Endothelial cell of umbilical vein (primary cell): ENCODE measurements at regions of chr12 and their contacts with region 1.

Region 1: DNA sequence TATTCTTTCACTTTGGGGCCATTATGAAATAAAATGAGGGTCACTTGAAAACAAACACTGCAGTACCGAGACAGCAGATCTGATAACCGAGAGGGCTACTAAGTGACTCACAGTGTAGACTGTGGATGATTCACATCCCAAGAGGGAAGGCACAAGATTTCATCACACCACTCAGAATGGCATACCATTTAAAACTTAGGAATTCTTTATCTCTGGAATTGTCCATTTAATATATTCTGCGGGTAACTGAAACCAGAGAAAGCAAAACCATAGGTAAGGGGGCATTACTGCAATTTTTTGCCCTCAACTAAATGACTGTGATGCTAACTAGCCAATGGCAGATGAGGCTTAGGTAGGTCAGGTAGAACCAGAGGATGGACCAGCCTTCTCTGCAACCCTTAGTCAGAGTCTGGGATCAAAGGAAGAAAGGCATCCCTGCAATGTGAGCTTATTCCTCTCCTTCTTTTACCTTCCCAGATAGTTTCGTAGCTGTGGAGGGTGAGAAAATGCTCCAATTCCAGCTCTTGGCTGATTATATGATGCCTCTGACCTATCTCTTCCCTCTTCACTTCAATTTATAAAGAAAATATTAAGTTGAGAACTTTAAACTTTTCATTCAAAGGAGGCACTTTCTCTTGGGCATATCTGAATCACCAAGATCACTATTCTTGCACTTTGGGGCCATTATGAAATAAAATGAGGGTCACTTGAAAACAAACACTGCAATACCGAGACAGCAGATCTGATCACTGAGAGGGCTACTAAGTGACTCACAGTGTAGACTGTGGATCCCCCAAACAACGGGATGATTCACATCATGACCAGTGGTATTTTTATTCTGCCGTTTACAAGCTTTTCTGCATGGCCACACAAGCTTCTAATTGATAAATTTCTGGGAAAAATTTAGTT is 6.8 kb downstream of the ART4 start:
- DNase-seq: peak; percentile 86
- H3K4me3 ChIP-seq: peak overlapping the region in 1 of 3 experiments; percentile 31
- H3K27ac ChIP-seq: peak overlapping the region; percentile 83
- H3K4me1 ChIP-seq: peaks cover 56% of the 10 kb centered on the region
- H3K27me3 ChIP-seq: no peaks in the 10 kb centered on the region
- CTCF ChIP-seq: no peak
- POLR2A ChIP-seq: no peak

Region 2: DNA sequence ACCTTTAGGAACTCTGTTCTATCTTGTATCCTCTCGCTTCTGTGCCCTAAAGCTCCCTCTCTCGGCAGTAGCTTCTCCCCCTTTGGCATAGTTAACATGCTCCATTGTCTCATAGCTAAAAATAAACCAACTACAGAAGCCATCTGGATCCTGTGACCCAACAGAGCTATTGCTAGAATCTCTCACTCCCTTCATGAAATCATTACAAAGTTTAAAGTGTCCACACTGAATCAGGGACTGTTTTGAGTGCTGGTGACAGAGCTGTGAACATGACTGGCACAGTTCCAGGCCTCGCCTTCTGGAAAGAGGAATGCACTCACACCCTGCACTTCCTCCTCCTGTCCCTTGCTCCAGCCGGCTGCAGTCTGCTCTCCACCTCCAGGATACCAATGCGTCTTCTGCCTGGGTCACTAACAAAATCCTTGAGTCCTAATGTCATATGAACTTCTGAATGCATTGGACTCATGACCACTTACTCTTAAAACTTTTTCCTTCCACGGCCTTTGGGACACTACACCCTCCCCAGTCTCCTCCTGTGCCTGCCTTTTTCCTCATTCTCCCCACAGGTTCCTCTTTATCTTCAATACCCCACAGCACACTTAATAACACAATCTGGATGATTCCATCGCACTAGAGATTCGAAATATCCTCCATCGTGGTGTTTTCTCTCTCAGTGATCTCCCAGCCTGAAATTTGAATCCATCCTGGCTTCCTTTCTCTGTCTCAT is 282.1 kb before region 1 on chr12:
- CTCF ChIA-PET with region 1: no interaction called
- POLR2A ChIA-PET with region 1: no interaction called
- dilution Hi-C with region 1: no loop called
- intact Hi-C with region 1: no loop called
- DNase-seq: no peak
- H3K4me3 ChIP-seq: no peak overlapping the region
- H3K27ac ChIP-seq: no peak overlapping the region
- H3K4me1 ChIP-seq: no peaks in the 10 kb centered on the region
- H3K27me3 ChIP-seq: no peaks in the 10 kb centered on the region
- CTCF ChIP-seq: no peak
- POLR2A ChIP-seq: no peak

Region 3: GRCh38 chr12:14803011-14803829 is 33.3 kb before region 1 on chr12 and contains the starts of genes C12orf60 and WBP11:
- CTCF ChIA-PET with region 1: interaction called, 5 read pairs
- POLR2A ChIA-PET with region 1: interaction called, 6 read pairs
- dilution Hi-C with region 1: no loop called
- intact Hi-C with region 1: loop called (anchors 1 kb)
- DNase-seq: peak; percentile 99
- H3K4me3 ChIP-seq: peak within 1 kb of the TSS; percentile 82 to 98 (median 97)
- H3K27ac ChIP-seq: peak within 1 kb of the TSS; percentile 90
- H3K4me1 ChIP-seq: peaks cover 17% of the 10 kb centered on the region
- H3K27me3 ChIP-seq: no peaks in the 10 kb centered on the region
- CTCF ChIP-seq: no peak
- POLR2A ChIP-seq: peak; percentile 92
- total RNA-seq, gene C12orf60: 1.1 and 1.3 TPM in 2 replicates
- total RNA-seq, gene WBP11: 70.5 and 77.1 TPM in 2 replicates

Region 4: DNA sequence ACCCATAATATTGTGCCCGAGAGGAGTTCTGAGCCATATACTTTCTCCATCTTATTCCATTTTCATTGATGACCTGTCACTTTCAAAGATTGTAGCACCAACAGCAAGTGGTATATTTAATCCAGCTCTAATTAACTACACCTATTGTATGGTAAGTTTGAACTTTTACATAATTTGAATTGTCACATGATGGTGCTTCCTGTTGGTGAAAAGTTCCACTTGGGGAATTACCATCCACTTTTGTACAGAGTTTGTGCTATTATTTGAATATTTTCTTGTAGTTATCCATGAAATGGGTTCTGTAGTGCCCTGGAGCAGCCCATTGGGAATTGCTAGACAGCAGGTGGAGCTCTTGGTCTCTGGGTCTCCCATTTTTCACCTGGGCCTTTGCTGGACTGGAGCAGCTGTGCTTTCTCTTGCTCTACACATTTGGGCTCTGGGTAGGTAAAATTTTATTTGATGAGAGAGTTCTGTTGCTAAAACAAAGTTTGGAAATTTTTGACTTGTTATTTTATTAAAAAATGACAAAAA is 25.5 kb before region 1 on chr12:
- CTCF ChIA-PET with region 1: interaction called, 13 read pairs
- POLR2A ChIA-PET with region 1: no interaction called
- dilution Hi-C with region 1: no loop called
- intact Hi-C with region 1: no loop called
- DNase-seq: peak; percentile 54
- H3K4me3 ChIP-seq: no peak overlapping the region
- H3K27ac ChIP-seq: no peak overlapping the region
- H3K4me1 ChIP-seq: no peaks in the 10 kb centered on the region
- H3K27me3 ChIP-seq: no peaks in the 10 kb centered on the region
- CTCF ChIP-seq: peak; percentile 57 to 61
- POLR2A ChIP-seq: no peak